ENCODE measurements at regions of chr10 and their contacts with region 1.

Region 1: GRCh38 chr10:7525314-7526016 is 114.6 kb upstream of the SFMBT2 start:
- DNase-seq: peak; percentile 77
- ATAC-seq: peak; percentile 90
- H3K4me3 Mint-ChIP-seq: no peak overlapping the region
- H3K27ac Mint-ChIP-seq: no peak overlapping the region
- H3K4me1 Mint-ChIP-seq: peaks cover 18% of the 10 kb centered on the region
- H3K27me3 Mint-ChIP-seq: peaks cover 2% of the 10 kb centered on the region

Region 2: DNA sequence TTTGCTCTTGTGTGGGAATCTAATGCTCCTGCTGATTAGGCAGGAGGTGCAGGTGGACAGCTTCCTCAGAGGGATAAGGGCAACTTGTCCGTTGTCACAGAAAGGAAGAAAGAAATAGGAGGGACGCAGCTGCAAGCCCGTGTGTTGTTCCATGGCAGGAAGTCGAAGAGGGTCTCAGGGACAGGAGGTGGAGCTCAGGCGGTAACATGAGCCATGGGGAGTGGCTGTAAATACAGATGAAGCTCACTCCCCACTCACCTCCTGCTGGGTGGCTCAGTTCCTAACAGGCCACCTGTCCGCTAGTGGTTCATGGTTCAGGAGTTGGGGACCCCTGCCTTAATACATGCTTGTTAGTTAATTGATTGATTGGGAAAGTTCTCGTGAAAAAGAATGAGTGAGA is 13.0 kb before region 1 on chr10:
- CTCF ChIA-PET with region 1: interaction called, 16 read pairs
- POLR2A ChIA-PET with region 1: no interaction called
- intact Hi-C with region 1: no loop called
- DNase-seq: no peak
- ATAC-seq: peak; percentile 33
- H3K4me3 Mint-ChIP-seq: no peak overlapping the region
- H3K27ac Mint-ChIP-seq: no peak overlapping the region
- H3K4me1 Mint-ChIP-seq: peaks cover 34% of the 10 kb centered on the region
- H3K27me3 Mint-ChIP-seq: no peaks in the 10 kb centered on the region

Region 3: DNA sequence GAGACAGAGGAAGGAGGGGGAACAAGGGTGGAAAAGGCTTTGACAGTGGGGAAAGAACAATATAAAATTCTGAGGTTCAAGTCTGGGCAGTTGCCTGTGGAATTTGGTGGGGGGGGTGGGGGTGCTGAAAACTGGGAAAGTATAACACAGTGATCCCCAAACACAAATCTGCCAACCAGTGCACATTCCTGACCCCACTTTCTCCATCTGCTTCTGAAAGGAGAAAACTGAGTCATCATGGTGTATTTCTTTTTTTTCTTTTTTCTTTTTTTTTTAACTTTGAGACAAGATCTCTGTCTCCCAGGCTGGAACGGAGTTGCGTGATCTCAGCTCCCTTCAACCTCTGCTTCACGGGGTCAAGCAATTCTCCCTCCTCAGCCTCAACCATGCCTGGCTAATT is 145.7 kb after region 1 on chr10:
- CTCF ChIA-PET with region 1: interaction called, 10 read pairs
- POLR2A ChIA-PET with region 1: no interaction called
- intact Hi-C with region 1: no loop called
- DNase-seq: no peak
- ATAC-seq: no peak
- H3K4me3 Mint-ChIP-seq: no peak overlapping the region
- H3K27ac Mint-ChIP-seq: no peak overlapping the region
- H3K4me1 Mint-ChIP-seq: peaks cover 7% of the 10 kb centered on the region
- H3K27me3 Mint-ChIP-seq: peaks cover 40% of the 10 kb centered on the region

Region 4: GRCh38 chr10:7687228-7687907 is 161.9 kb after region 1 on chr10:
- CTCF ChIA-PET with region 1: interaction called, 97 read pairs
- POLR2A ChIA-PET with region 1: no interaction called
- intact Hi-C with region 1: loop called (anchors 1 kb)
- DNase-seq: peak; percentile 89
- ATAC-seq: peak; percentile 92
- H3K4me3 Mint-ChIP-seq: no peak overlapping the region
- H3K27ac Mint-ChIP-seq: no peak overlapping the region
- H3K4me1 Mint-ChIP-seq: peaks cover 7% of the 10 kb centered on the region
- H3K27me3 Mint-ChIP-seq: peaks cover 7% of the 10 kb centered on the region

Region 5: DNA sequence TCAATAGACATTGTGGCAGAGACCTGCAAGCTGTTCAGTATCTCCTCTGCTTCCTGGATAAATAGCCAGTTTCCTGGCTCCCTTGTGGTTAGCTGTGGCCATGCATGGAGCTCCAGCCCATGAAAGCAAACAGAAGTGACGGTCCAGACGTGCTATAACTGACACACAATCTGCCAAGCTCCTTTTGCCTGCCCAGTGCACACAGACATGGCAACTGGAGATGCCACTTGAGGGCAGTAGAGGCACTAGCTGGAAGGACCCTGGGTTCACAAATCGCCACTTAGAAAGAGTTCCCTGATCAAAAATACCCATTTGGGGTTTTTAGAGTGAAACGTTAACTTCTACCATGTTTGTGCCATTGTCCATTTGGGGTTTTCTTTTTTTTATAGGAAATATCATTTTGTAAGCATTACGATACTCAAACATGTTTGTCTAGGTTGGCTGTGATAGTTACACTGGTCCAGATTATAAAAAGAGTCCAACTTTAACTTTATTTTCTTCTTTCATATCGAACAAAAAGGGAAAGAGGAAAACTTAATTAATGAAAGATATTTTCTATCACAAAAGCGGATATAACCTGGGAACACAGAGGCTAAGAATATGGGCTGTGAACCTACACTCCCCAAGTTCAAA is 231.0 kb after region 1 on chr10:
- CTCF ChIA-PET with region 1: interaction called, 4 read pairs
- POLR2A ChIA-PET with region 1: no interaction called
- intact Hi-C with region 1: loop called in 1 of 2 experiments (anchors 10 kb)
- DNase-seq: peak; percentile 49
- ATAC-seq: peak; percentile 53
- H3K4me3 Mint-ChIP-seq: no peak overlapping the region
- H3K27ac Mint-ChIP-seq: no peak overlapping the region
- H3K4me1 Mint-ChIP-seq: no peaks in the 10 kb centered on the region
- H3K27me3 Mint-ChIP-seq: no peaks in the 10 kb centered on the region

Region 6: GRCh38 chr10:7818295-7819122 is 293.0 kb after region 1 on chr10 and contains the start of gene TAF3:
- CTCF ChIA-PET with region 1: no interaction called
- POLR2A ChIA-PET with region 1: no interaction called
- intact Hi-C with region 1: loop called in 1 of 2 experiments (anchors 10 kb)
- DNase-seq: peak; percentile 96
- ATAC-seq: peak; percentile 89
- H3K4me3 Mint-ChIP-seq: peak within 1 kb of the TSS; percentile 88
- H3K27ac Mint-ChIP-seq: peak within 1 kb of the TSS; percentile 83
- H3K4me1 Mint-ChIP-seq: peaks cover 25% of the 10 kb centered on the region
- H3K27me3 Mint-ChIP-seq: peaks cover 3% of the 10 kb centered on the region
- total RNA-seq, gene TAF3: 12.2 to 17.7 TPM